ENCODE measurements at regions of chr5 and their contacts with region 1.

Region 1: DNA sequence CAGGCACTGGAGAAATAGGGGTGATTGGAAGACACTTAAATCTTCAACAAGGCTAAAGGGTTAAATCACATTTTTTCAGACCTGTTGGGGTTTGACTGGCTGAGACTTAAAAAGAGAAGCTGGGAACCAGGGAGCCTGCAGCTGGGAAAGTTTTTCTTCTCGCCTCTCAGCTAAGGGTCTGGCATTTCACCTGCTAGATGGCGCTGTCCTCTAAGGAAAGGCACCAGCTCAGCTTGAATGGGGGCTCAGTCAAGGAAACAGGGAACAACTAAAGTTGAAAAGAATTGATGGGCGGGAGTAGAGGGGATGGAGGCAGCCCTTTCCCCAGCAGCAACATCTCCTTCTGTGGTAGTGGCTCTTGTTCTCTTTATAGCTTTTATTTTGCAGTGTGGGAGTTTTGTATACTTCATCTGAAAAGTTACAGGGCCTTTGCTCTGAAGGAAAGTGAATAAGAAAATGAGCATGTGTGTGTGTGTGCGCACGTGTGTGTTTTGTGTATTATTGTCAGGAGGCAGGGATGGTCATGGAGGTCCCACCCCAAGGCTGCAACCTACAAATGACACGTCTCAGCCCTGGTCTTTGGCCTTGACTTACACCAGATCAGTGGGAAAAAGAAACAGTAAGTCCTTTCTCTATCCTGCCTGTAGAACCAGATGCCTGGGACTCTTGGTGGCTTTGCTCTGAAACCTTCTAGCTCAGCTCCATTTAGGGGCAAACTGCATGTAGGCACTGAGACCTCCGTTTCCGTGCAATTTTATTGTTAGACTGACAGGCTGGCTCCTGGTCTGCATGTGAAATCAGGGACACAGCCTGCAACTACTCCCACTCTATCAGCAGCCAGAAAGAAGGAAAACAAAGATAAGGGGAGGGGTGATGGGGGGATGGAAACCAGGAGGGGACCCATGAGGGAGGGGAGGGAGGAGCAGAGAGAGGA is 316.2 kb upstream of the CLINT1 start:
- DNase-seq: peak; percentile 75 to 82
- H3K4me3 ChIP-seq: no peak overlapping the region
- H3K27ac ChIP-seq: no peak overlapping the region
- H3K4me1 ChIP-seq: peaks cover 0 to 14% (median 12%) of the 10 kb centered on the region in 4 donors
- H3K27me3 ChIP-seq: no peaks in the 10 kb centered on the region
- CTCF ChIP-seq: peak; percentile 71 to 88

Region 2: GRCh38 chr5:157948738-157949410 is 226.3 kb before region 1 on chr5:
- intact Hi-C with region 1: no loop called
- DNase-seq: peak; percentile 94
- H3K4me3 ChIP-seq: peak overlapping the region in 1 of 2 donors; percentile 16
- H3K27ac ChIP-seq: peak overlapping the region; percentile 70 to 72
- H3K4me1 ChIP-seq: peaks cover 0 to 13% (median 3%) of the 10 kb centered on the region in 4 donors
- H3K27me3 ChIP-seq: no peaks in the 10 kb centered on the region
- CTCF ChIP-seq: peak; percentile 84 to 91

Region 3: DNA sequence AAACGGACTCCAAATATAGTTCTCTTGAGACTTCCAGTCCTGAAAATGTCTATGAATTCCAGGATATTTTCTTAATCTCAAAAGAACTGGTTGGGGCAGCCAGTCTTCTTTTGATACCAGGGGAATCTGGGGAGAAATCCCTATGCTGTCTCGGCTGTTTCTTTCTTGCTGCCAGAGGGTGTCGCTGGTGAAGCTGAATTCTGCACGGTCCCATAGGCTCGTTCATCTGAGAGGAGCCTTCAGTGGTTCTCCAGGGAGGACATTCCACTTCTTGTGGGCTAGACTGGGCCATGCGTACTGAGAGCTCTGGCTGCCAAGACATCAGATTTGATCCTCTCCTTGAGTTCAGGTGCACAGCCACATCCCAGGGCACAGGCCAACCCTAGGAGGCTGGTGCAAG is 161.2 kb before region 1 on chr5:
- intact Hi-C with region 1: no loop called
- DNase-seq: no peak
- H3K4me3 ChIP-seq: no peak overlapping the region
- H3K27ac ChIP-seq: no peak overlapping the region
- H3K4me1 ChIP-seq: peaks cover 0 to 12% (median 4%) of the 10 kb centered on the region in 4 donors
- H3K27me3 ChIP-seq: no peaks in the 10 kb centered on the region
- CTCF ChIP-seq: peak; percentile 26 to 33

Region 4: GRCh38 chr5:158108177-158108576 is 67.0 kb before region 1 on chr5:
- intact Hi-C with region 1: no loop called
- DNase-seq: no peak
- H3K4me3 ChIP-seq: no peak overlapping the region
- H3K27ac ChIP-seq: no peak overlapping the region
- H3K4me1 ChIP-seq: no peaks in the 10 kb centered on the region
- H3K27me3 ChIP-seq: no peaks in the 10 kb centered on the region
- CTCF ChIP-seq: no peak

Region 5: GRCh38 chr5:158695595-158696330 is 520.6 kb after region 1 on chr5:
- intact Hi-C with region 1: loop called (anchors 2 kb)
- DNase-seq: peak; percentile 68 to 84
- H3K4me3 ChIP-seq: no peak overlapping the region
- H3K27ac ChIP-seq: peak overlapping the region in 1 of 2 donors; percentile 14
- H3K4me1 ChIP-seq: peaks cover 0 to 63% (median 35%) of the 10 kb centered on the region in 4 donors
- H3K27me3 ChIP-seq: no peaks in the 10 kb centered on the region
- CTCF ChIP-seq: peak; percentile 97

Region 6: DNA sequence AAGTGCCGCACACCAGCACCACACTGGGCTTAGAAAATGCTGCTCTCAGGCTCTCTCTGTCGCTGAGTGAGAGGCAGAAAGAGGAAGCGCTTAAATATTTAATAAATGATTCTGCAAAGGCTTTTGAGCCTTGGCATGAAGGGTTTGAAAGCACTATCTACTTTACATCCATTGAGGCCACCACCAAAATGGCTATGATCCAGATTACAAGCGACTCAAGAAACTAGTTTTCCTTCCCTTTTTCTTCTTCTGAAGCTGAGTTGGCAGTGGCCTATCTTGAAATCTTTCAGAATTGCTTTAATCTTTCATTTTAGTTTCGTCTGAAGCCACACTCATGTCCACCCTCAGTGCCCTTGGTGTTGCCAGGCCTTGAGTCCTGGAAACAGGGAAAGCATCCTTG is 865.0 kb after region 1 on chr5:
- intact Hi-C with region 1: loop called (anchors 5 kb)
- DNase-seq: no peak
- H3K4me3 ChIP-seq: no peak overlapping the region
- H3K27ac ChIP-seq: peak overlapping the region; percentile 67 to 75
- H3K4me1 ChIP-seq: peaks cover 0 to 85% (median 53%) of the 10 kb centered on the region in 4 donors
- H3K27me3 ChIP-seq: no peaks in the 10 kb centered on the region
- CTCF ChIP-seq: no peak

Measured in tibial artery (tissue), 4 donors.